ENCODE measurements at regions of chr6 and their contacts with region 1.

Region 1: DNA sequence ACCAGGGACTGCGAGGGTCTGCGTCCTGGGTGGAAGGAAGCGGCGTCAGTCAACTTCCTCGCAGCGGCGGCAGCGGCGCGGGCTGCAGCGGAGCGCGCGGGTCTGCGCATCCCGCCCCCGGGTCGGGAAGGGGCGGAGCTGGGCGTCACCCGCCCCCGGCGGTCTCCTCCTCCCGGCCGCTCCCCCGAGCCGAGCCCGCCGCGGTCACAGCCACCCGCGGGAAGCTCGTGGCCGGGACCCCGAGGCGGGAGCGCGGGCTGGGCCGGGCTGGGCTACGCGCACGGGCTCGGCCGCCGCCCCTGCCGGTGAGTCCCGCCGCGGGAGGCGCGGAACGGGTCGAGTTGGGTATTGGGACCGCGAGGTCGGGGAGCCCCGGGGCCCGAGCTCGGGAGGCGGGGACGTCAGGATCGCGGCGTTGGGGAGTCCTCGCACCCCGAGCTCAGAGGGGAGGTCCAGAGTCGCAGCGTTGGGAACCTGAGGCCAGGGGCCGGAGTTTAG is at the start of gene PAQR8:
- DNase-seq: peak; percentile 88
- ATAC-seq: peak; percentile 89
- H3K4me3 Mint-ChIP-seq: peak within 1 kb of the TSS; percentile 99
- H3K27ac Mint-ChIP-seq: peak within 1 kb of the TSS; percentile 94
- H3K4me1 Mint-ChIP-seq: peaks cover 42% of the 10 kb centered on the region
- H3K27me3 Mint-ChIP-seq: no peaks in the 10 kb centered on the region
- total RNA-seq, gene PAQR8: 9.0 to 9.1 TPM

Region 2: DNA sequence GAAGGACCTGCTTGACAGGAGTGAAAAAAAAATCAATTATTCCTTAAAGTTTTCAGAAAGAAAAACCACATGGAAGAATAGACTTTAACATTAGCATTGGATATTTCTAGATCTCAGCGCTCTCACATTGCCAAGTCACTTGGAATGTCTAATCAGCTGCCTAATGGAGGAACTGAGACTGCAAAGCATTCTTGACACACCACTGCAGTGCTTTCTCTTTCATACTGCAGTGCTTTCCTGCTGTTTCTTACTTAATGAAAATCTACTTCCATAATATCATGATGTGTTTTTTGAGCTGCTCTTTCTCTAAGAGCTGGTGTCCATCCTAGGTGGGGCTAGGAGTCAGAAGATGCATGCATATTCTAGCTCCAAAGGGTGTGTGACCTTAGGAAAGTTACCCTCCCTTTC is 57.0 kb before region 1 on chr6:
- CTCF ChIA-PET with region 1: interaction called, 3 read pairs
- POLR2A ChIA-PET with region 1: interaction called, 3 read pairs
- intact Hi-C with region 1: loop called (anchors 5 kb)
- DNase-seq: no peak
- ATAC-seq: peak; percentile 42
- H3K4me3 Mint-ChIP-seq: peak overlapping the region; percentile 32
- H3K27ac Mint-ChIP-seq: peak overlapping the region; percentile 89
- H3K4me1 Mint-ChIP-seq: peaks cover 72% of the 10 kb centered on the region
- H3K27me3 Mint-ChIP-seq: no peaks in the 10 kb centered on the region

Region 3: DNA sequence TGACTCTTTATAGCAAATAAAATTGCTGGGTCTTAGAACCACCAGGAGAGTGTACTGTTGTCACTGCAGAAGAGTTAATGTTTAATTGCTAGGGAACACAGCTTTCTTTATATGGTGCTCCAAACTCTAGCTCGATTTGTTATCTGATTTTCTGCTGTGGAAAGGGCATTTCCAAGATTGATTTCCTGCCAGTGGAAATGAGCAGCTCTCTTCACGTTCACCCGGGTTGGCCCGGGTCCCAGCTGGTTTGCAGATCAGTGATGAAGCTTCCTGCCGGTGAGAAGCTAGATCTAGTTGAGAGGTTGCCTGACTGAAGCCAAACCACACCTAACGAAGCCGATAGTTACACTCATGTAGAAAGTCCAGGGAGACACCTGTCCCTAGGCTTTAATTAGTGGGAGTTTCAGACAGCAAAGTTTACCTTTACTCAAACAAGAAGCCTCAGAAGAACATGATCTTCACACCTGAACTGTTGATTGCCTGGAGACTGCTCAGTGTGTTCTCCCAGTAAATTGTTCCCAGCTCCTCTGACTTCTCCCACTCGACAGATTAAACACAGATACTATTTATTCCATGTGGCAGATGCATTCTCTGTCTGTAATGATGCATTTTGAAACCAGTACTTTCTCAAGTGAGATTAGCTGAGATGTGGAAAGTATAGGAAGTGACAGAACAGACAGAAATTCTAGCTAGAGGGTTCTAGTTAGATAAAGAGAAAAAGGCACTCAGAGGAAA is 27.8 kb after region 1 on chr6:
- CTCF ChIA-PET with region 1: interaction called, 9 read pairs
- POLR2A ChIA-PET with region 1: interaction called, 13 read pairs
- intact Hi-C with region 1: loop called (anchors 1 to 2 kb)
- DNase-seq: peak; percentile 74
- ATAC-seq: peak; percentile 52
- H3K4me3 Mint-ChIP-seq: peak overlapping the region; percentile 38
- H3K27ac Mint-ChIP-seq: peak overlapping the region; percentile 86
- H3K4me1 Mint-ChIP-seq: peaks cover 85% of the 10 kb centered on the region
- H3K27me3 Mint-ChIP-seq: no peaks in the 10 kb centered on the region

Region 4: GRCh38 chr6:52399511-52400312 is 37.7 kb after region 1 on chr6:
- CTCF ChIA-PET with region 1: interaction called, 18 read pairs
- POLR2A ChIA-PET with region 1: interaction called, 5 read pairs
- intact Hi-C with region 1: loop called (anchors 1 to 2 kb)
- DNase-seq: peak; percentile 54
- ATAC-seq: peak; percentile 51
- H3K4me3 Mint-ChIP-seq: no peak overlapping the region
- H3K27ac Mint-ChIP-seq: no peak overlapping the region
- H3K4me1 Mint-ChIP-seq: peaks cover 64% of the 10 kb centered on the region
- H3K27me3 Mint-ChIP-seq: no peaks in the 10 kb centered on the region